ENCODE measurements at regions of chr2 and their contacts with region 1.

Region 1: GRCh38 chr2:197499594-197500526 is at the starts of genes HSPD1 and HSPE1:
- DNase-seq: peak; percentile 100
- ATAC-seq: peak; percentile 84
- H3K4me3 ChIP-seq: peak within 1 kb of the TSS; percentile 60 to 86 (median 76)
- H3K4me3 Mint-ChIP-seq: peak within 1 kb of the TSS; percentile 98
- H3K27ac ChIP-seq: peak within 1 kb of the TSS; percentile 85 to 90
- H3K27ac Mint-ChIP-seq: peak within 1 kb of the TSS; percentile 94
- H3K4me1 ChIP-seq: peaks cover 37 to 38% of the 10 kb centered on the region in 2 donors
- H3K4me1 Mint-ChIP-seq: peaks cover 53% of the 10 kb centered on the region
- H3K27me3 ChIP-seq: no peaks in the 10 kb centered on the region
- H3K27me3 Mint-ChIP-seq: no peaks in the 10 kb centered on the region
- CTCF ChIP-seq: no peak
- total RNA-seq, gene HSPD1: 112 and 120 TPM in 2 replicates
- total RNA-seq, gene HSPE1: 37.9 and 46.2 TPM in 2 replicates

Region 2: DNA sequence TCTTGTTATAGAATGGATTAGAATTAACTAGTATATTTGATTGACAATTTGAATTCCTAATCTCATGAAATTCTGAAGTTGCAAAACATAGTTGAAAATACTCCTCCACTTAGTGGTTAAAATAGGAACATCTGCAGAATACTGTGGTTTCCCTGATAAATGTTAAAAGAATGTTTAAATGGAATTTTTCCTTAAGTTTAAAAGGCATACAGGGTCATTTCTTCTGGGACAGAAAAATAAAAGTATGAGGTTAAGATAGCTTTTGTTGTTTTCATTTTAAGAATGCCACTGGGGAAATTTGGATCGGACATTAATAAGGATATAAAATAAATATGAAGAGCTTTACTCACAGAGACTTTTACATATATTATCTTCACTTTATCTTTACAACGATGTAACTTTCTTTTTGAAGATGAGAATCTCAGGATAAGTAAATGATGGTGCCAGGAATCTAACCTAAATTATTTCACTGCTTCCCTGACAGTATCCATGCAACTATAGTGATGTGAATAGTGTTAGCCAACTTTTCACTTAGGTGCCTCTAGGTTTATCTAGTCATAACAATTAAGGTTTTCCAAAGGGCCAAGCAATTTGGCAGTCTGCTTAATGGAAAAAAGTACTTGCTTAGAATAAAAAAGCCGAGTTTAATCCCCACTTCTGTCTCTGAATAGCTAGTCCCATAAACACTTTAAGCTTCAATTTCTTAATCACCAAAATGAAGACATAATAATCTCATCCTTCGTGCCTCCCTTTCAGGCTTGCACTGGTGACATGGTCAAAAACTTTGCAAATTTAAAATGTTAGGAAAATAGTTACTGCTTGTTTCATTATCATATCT is 1176.7 kb before region 1 on chr2:
- CTCF ChIA-PET with region 1: no interaction called
- POLR2A ChIA-PET with region 1: no interaction called
- intact Hi-C with region 1: no loop called
- DNase-seq: no peak
- ATAC-seq: no peak
- H3K4me3 ChIP-seq: no peak overlapping the region
- H3K4me3 Mint-ChIP-seq: no peak overlapping the region
- H3K27ac ChIP-seq: no peak overlapping the region
- H3K27ac Mint-ChIP-seq: no peak overlapping the region
- H3K4me1 ChIP-seq: no peaks in the 10 kb centered on the region
- H3K4me1 Mint-ChIP-seq: no peaks in the 10 kb centered on the region
- H3K27me3 ChIP-seq: no peaks in the 10 kb centered on the region
- H3K27me3 Mint-ChIP-seq: peaks cover 6% of the 10 kb centered on the region
- CTCF ChIP-seq: no peak

Region 3: GRCh38 chr2:197293252-197294007 is 206.4 kb before region 1 on chr2:
- CTCF ChIA-PET with region 1: no interaction called
- POLR2A ChIA-PET with region 1: no interaction called
- intact Hi-C with region 1: no loop called
- DNase-seq: peak; percentile 29
- ATAC-seq: peak; percentile 31
- H3K4me3 ChIP-seq: peak overlapping the region; percentile 14 to 69 (median 50)
- H3K4me3 Mint-ChIP-seq: peak overlapping the region; percentile 86
- H3K27ac ChIP-seq: peak overlapping the region; percentile 69 to 86
- H3K27ac Mint-ChIP-seq: peak overlapping the region; percentile 84
- H3K4me1 ChIP-seq: peaks cover 72 to 88% of the 10 kb centered on the region in 2 donors
- H3K4me1 Mint-ChIP-seq: peaks cover 81% of the 10 kb centered on the region
- H3K27me3 ChIP-seq: no peaks in the 10 kb centered on the region
- H3K27me3 Mint-ChIP-seq: no peaks in the 10 kb centered on the region
- CTCF ChIP-seq: no peak

Region 4: DNA sequence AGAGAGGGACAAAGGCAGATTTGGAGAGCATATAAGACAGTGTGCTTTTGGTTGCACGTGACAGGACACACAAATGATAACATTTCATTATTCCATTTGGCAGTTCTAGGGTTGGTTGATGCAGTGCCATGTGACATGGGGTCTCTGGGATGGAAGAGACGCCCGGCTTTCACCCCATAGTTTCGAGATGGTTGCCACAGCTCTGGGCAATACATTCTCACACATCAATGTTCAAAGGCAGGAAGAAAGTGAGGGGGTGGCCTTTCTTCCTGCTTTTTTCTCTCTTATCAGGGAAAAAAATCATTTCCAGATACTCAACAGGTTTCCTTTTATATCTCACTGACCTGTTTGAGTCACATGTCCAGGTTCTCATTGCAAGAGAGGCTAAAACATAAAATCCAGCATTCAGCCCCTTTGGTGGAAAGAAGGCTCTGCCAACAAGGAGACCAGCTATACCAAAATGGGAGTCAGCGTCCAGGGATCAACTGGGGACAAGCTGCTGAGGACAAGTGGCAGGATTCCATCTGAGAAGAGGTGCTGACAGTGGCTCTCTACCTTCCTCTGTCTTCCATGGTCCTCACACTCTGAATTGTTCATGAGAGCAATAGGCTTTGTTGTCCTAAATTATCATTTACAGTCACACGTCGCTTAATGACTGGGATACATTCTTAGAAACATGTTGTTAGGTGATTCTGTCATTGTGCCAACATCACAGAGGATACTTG is 160.2 kb before region 1 on chr2:
- CTCF ChIA-PET with region 1: no interaction called
- POLR2A ChIA-PET with region 1: no interaction called
- intact Hi-C with region 1: no loop called
- DNase-seq: no peak
- ATAC-seq: no peak
- H3K4me3 ChIP-seq: no peak overlapping the region
- H3K4me3 Mint-ChIP-seq: no peak overlapping the region
- H3K27ac ChIP-seq: no peak overlapping the region
- H3K27ac Mint-ChIP-seq: no peak overlapping the region
- H3K4me1 ChIP-seq: no peaks in the 10 kb centered on the region
- H3K4me1 Mint-ChIP-seq: no peaks in the 10 kb centered on the region
- H3K27me3 ChIP-seq: no peaks in the 10 kb centered on the region
- H3K27me3 Mint-ChIP-seq: peaks cover 4% of the 10 kb centered on the region
- CTCF ChIP-seq: no peak

Region 5: GRCh38 chr2:197399887-197400540 is 99.8 kb before region 1 on chr2:
- CTCF ChIA-PET with region 1: no interaction called
- POLR2A ChIA-PET with region 1: no interaction called
- intact Hi-C with region 1: loop called (anchors 10 kb)
- DNase-seq: no peak
- ATAC-seq: no peak
- H3K4me3 ChIP-seq: no peak overlapping the region
- H3K4me3 Mint-ChIP-seq: no peak overlapping the region
- H3K27ac ChIP-seq: no peak overlapping the region
- H3K27ac Mint-ChIP-seq: no peak overlapping the region
- H3K4me1 ChIP-seq: no peaks in the 10 kb centered on the region
- H3K4me1 Mint-ChIP-seq: no peaks in the 10 kb centered on the region
- H3K27me3 ChIP-seq: no peaks in the 10 kb centered on the region
- H3K27me3 Mint-ChIP-seq: no peaks in the 10 kb centered on the region
- CTCF ChIP-seq: no peak

Region 6: DNA sequence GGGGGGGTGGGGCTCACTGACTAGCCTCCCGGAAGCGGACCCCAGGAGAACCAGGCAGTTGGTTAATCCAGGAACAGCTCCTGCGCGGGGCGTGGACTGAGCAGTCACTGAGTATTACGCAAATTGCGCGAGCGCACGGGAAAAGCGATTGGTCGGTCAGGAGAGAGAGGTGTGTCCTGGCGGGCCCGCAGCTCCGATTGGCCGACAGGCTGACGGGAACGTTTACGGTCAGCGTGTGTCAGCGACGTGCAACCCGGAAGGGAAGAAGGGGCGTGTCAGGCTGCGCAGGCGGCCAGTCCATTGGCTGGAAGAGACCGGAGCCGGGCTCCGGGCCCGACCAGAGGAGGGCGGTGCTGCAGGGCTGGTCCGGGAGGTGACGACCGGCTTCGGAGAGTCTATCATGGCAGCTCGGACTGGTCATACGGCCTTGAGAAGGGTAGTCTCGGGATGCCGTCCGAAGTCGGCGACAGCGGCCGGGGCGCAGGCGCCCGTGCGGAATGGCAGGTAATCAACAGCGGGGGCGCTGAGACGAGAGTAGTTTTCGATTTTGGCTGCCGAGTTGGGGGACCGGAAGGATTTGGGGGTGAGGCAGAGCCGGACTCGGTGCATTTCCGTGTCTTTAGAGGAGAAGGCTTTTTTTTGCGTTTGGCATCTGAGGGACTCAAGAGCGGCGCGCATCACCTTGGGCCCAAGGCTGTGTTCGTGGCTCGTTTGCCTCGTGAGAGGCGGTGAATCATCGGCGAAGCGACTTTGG is 46.5 kb before region 1 on chr2 and contains the start of gene COQ10B:
- CTCF ChIA-PET with region 1: interaction called, 5 read pairs
- POLR2A ChIA-PET with region 1: interaction called, 19 read pairs
- intact Hi-C with region 1: loop called (anchors 1 kb)
- DNase-seq: peak; percentile 99
- ATAC-seq: peak; percentile 90
- H3K4me3 ChIP-seq: peak within 1 kb of the TSS; percentile 82 to 99 (median 89)
- H3K4me3 Mint-ChIP-seq: peak within 1 kb of the TSS; percentile 99
- H3K27ac ChIP-seq: peak within 1 kb of the TSS; percentile 95 to 96
- H3K27ac Mint-ChIP-seq: peak within 1 kb of the TSS; percentile 99
- H3K4me1 ChIP-seq: peaks cover 17 to 19% of the 10 kb centered on the region in 2 donors
- H3K4me1 Mint-ChIP-seq: peaks cover 42% of the 10 kb centered on the region
- H3K27me3 ChIP-seq: no peaks in the 10 kb centered on the region
- H3K27me3 Mint-ChIP-seq: no peaks in the 10 kb centered on the region
- CTCF ChIP-seq: no peak
- total RNA-seq, gene COQ10B: 29.1 and 29.6 TPM in 2 replicates

Region 7: GRCh38 chr2:197480165-197481036 is 19.5 kb before region 1 on chr2:
- CTCF ChIA-PET with region 1: no interaction called
- POLR2A ChIA-PET with region 1: no interaction called
- intact Hi-C with region 1: no loop called
- DNase-seq: no peak
- ATAC-seq: no peak
- H3K4me3 ChIP-seq: no peak overlapping the region
- H3K4me3 Mint-ChIP-seq: no peak overlapping the region
- H3K27ac ChIP-seq: no peak overlapping the region
- H3K27ac Mint-ChIP-seq: no peak overlapping the region
- H3K4me1 ChIP-seq: no peaks in the 10 kb centered on the region
- H3K4me1 Mint-ChIP-seq: no peaks in the 10 kb centered on the region
- H3K27me3 ChIP-seq: no peaks in the 10 kb centered on the region
- H3K27me3 Mint-ChIP-seq: no peaks in the 10 kb centered on the region
- CTCF ChIP-seq: no peak

Region 8: GRCh38 chr2:197515739-197516392 is 16.0 kb after region 1 on chr2 and contains the start of gene MOB4:
- CTCF ChIA-PET with region 1: interaction called, 5 read pairs
- POLR2A ChIA-PET with region 1: interaction called, 62 read pairs
- intact Hi-C with region 1: loop called (anchors 1 kb)
- DNase-seq: peak; percentile 98
- ATAC-seq: peak; percentile 95
- H3K4me3 ChIP-seq: peak within 1 kb of the TSS; percentile 79 to 90 (median 85)
- H3K4me3 Mint-ChIP-seq: peak within 1 kb of the TSS; percentile 97
- H3K27ac ChIP-seq: peak within 1 kb of the TSS; percentile 92 to 96
- H3K27ac Mint-ChIP-seq: peak within 1 kb of the TSS; percentile 91
- H3K4me1 ChIP-seq: peaks cover 10 to 17% of the 10 kb centered on the region in 2 donors
- H3K4me1 Mint-ChIP-seq: peaks cover 41% of the 10 kb centered on the region
- H3K27me3 ChIP-seq: no peaks in the 10 kb centered on the region
- H3K27me3 Mint-ChIP-seq: no peaks in the 10 kb centered on the region
- CTCF ChIP-seq: no peak
- total RNA-seq, gene MOB4: 20.1 and 20.8 TPM in 2 replicates

Measured in B cell (primary cell).